ENCODE measurements at regions of chr21 and their contacts with region 1.

Region 1: GRCh38 chr21:17512253-17513213 is at the start of gene CXADR:
- DNase-seq: peak; percentile 85
- H3K4me3 Mint-ChIP-seq: peak within 1 kb of the TSS; percentile 77
- H3K27ac Mint-ChIP-seq: peak within 1 kb of the TSS; percentile 81
- H3K4me1 Mint-ChIP-seq: peaks cover 18% of the 10 kb centered on the region
- H3K27me3 Mint-ChIP-seq: no peaks in the 10 kb centered on the region
- CTCF ChIP-seq: peak; percentile 71
- total RNA-seq, gene CXADR: 7.9 TPM in 2 replicates

Region 2: GRCh38 chr21:17352937-17353655 is 159.4 kb before region 1 on chr21:
- CTCF ChIA-PET with region 1: no interaction called
- POLR2A ChIA-PET with region 1: no interaction called
- intact Hi-C with region 1: no loop called
- DNase-seq: no peak
- H3K4me3 Mint-ChIP-seq: no peak overlapping the region
- H3K27ac Mint-ChIP-seq: no peak overlapping the region
- H3K4me1 Mint-ChIP-seq: no peaks in the 10 kb centered on the region
- H3K27me3 Mint-ChIP-seq: no peaks in the 10 kb centered on the region
- CTCF ChIP-seq: no peak

Region 3: DNA sequence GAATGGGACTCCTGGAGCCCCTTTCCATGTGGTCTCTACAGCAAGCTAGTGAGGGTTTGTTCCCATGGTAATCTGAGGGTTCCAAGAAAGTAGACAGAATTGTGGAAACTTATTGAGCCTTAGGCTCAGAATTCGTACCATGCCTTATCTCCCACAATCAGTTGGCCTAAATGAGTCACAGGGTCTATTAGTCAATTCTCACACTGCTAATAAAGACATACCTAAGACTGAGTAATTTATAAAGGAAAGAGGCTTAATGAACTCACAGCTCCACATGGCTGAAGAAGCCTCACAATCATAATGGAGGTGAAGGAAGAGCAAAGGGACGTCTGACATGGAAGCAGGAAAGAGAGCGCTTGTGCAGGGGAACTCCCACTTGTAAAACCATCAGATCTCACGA is 106.3 kb before region 1 on chr21:
- CTCF ChIA-PET with region 1: no interaction called
- POLR2A ChIA-PET with region 1: no interaction called
- intact Hi-C with region 1: no loop called
- DNase-seq: peak; percentile 11
- H3K4me3 Mint-ChIP-seq: no peak overlapping the region
- H3K27ac Mint-ChIP-seq: no peak overlapping the region
- H3K4me1 Mint-ChIP-seq: peaks cover 6% of the 10 kb centered on the region
- H3K27me3 Mint-ChIP-seq: no peaks in the 10 kb centered on the region
- CTCF ChIP-seq: no peak

Region 4: DNA sequence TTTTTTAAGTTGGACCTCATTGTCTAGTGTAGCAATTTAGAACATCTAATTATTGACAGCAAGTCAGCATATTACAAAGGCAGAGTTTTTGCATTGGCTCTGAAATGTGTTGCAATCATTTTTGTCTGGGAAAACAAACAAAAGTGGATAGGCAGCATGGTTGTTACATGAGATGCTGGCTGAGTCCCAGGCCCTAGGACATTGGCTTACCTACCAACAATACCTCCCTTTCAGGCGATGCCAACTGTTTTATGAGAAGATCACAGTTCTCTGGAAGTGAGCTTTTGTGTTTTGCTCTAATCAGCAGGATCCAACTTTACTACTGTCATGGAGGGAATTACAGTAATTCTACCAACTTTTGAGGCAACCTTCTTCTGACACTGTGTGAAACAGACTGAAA is 71.2 kb before region 1 on chr21:
- CTCF ChIA-PET with region 1: interaction called, 4 read pairs
- POLR2A ChIA-PET with region 1: interaction called, 11 read pairs
- intact Hi-C with region 1: no loop called
- DNase-seq: peak; percentile 97
- H3K4me3 Mint-ChIP-seq: no peak overlapping the region
- H3K27ac Mint-ChIP-seq: no peak overlapping the region
- H3K4me1 Mint-ChIP-seq: peaks cover 21% of the 10 kb centered on the region
- H3K27me3 Mint-ChIP-seq: no peaks in the 10 kb centered on the region
- CTCF ChIP-seq: no peak

Region 5: DNA sequence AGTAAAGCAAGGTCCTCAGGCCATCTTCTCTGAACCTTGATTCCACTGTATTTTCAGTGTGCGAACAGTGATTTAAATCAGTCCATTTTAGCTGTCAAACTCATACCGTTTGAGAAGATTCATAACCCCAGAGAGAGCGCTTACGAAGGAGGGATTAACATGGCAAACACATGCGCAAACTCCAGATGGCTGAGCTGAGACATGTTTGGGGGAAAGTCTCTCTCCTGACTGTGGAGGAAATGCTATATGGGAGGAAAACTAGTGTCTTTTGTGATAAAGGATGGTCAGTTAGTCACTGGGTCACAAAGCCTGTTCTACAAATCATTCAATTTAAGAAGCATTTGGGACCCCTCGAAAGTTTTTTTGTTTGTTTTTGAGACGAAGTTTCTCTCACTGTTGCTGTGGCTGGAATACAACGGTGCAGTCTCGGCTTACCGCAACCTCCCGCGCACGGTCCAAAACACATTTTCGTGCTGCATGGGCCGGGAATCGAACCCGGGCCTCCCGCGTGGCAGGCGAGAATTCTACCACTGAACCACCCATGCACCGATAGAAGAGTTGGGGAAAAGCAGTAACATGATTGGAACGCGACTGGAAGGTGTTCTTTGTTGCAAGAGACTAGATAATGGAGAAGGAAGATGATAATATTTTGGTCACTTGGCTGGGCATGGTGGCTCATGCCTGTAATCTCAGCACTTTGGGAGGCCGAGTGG is 58.1 kb before region 1 on chr21:
- CTCF ChIA-PET with region 1: interaction called, 5 read pairs
- POLR2A ChIA-PET with region 1: interaction called, 3 read pairs
- intact Hi-C with region 1: loop called (anchors 2 kb)
- DNase-seq: peak; percentile 85
- H3K4me3 Mint-ChIP-seq: peak overlapping the region; percentile 28
- H3K27ac Mint-ChIP-seq: peak overlapping the region; percentile 77
- H3K4me1 Mint-ChIP-seq: peaks cover 7% of the 10 kb centered on the region
- H3K27me3 Mint-ChIP-seq: no peaks in the 10 kb centered on the region
- CTCF ChIP-seq: no peak

Region 6: GRCh38 chr21:17501107-17502006 is 11.2 kb before region 1 on chr21:
- CTCF ChIA-PET with region 1: interaction called, 3 read pairs
- POLR2A ChIA-PET with region 1: interaction called, 11 read pairs
- intact Hi-C with region 1: no loop called
- DNase-seq: no peak
- H3K4me3 Mint-ChIP-seq: no peak overlapping the region
- H3K27ac Mint-ChIP-seq: no peak overlapping the region
- H3K4me1 Mint-ChIP-seq: no peaks in the 10 kb centered on the region
- H3K27me3 Mint-ChIP-seq: no peaks in the 10 kb centered on the region
- CTCF ChIP-seq: no peak

Region 7: DNA sequence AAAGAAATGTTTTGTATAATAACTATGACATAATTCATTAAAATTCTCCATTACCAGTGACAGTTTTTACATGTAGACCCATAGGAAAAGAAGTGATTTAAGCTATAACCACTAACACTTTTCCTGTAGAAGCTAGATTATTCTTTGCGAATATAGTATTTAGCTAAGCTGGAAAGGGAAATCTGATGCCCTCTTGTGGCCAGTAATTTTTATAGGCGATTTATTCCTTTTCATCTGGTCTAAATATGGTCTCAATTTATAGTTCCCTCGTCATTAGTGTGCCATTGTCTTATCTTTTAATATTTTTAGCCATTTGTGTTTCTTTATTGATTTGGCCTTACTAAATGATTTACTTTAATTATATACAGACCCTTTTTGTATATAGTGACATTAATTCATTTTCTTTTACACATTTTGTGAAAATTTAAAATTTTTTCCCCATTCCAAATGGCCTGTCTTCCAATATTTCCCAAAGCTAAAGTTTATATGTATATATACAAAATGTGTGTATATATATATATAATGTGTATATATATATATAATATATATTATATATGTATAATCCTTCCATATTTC is 73.4 kb after region 1 on chr21:
- CTCF ChIA-PET with region 1: interaction called, 3 read pairs
- POLR2A ChIA-PET with region 1: no interaction called
- intact Hi-C with region 1: loop called (anchors 10 kb)
- DNase-seq: peak; percentile 62
- H3K4me3 Mint-ChIP-seq: no peak overlapping the region
- H3K27ac Mint-ChIP-seq: no peak overlapping the region
- H3K4me1 Mint-ChIP-seq: no peaks in the 10 kb centered on the region
- H3K27me3 Mint-ChIP-seq: no peaks in the 10 kb centered on the region
- CTCF ChIP-seq: peak; percentile 45

Measured in MCF 10A (cell line).